ENCODE measurements at regions of chr13 and their contacts with region 1.

Region 1: GRCh38 chr13:91946498-91947070 is 548.2 kb downstream of the GPC5 start:
- DNase-seq: no peak
- ATAC-seq: no peak
- H3K4me3 ChIP-seq: no peak overlapping the region
- H3K27ac ChIP-seq: no peak overlapping the region
- H3K4me1 ChIP-seq: no peaks in the 10 kb centered on the region
- H3K27me3 ChIP-seq: no peaks in the 10 kb centered on the region

Region 2: DNA sequence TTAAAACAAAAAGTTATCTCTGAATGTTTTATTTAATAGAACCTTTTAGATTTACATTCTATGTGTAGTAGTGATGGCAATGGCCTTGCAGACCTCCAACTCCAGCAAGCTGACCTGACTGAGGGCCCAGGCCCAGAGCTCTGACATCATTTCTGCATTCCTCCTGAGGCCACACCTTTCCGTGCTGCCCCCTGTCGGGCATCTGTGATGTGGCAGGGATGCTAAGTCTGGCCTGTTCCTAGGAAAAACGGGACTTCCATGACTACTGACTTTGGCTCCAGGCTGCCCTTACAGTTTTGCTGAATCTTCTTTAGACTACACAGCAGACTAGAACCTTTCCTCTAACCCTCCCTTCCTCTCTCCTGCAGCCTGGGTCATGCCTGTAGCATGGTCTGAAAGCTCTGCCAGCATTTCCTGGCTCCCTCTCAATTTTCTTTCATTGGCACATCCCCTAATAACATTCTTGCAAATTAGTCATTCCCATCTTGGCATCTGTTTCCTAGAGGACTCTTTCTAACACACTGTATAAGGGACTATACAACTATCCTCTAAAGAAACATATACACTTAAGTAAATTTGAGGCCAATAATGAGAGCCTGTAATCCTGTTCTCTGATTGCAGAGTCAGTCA is 299.1 kb before region 1 on chr13:
- intact Hi-C with region 1: no loop called
- DNase-seq: peak in 1 of 3 donors; percentile 15
- ATAC-seq: peak; percentile 67 to 79
- H3K4me3 ChIP-seq: no peak overlapping the region
- H3K27ac ChIP-seq: no peak overlapping the region
- H3K4me1 ChIP-seq: no peaks in the 10 kb centered on the region
- H3K27me3 ChIP-seq: no peaks in the 10 kb centered on the region

Region 3: DNA sequence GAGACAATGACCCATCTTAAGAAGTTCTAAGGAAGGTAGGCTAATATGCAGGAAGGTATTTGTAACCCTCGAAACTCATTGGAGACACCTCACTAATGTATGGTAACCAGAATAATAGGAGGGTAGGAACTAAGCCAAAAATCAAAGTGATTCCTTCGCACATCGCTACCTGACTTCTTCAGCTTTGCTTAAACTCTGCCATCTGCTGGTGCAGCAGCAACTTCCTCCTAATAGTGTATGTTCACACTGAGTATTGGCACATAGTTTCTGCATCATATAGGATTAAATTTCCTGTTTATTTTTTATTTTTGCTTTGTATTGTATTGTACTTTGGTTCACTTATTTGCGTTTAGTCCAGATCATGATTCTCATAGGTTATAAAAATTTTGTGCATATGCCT is 128.1 kb after region 1 on chr13:
- intact Hi-C with region 1: loop called in 1 of 4 experiments (anchors 5 kb)
- DNase-seq: no peak
- ATAC-seq: no peak
- H3K4me3 ChIP-seq: no peak overlapping the region
- H3K27ac ChIP-seq: no peak overlapping the region
- H3K4me1 ChIP-seq: no peaks in the 10 kb centered on the region
- H3K27me3 ChIP-seq: no peaks in the 10 kb centered on the region

Measured in right cardiac atrium (tissue), 5 donors.